Lower leg skin (tissue), 4 donors: ENCODE measurements at regions of chr1 and their contacts with region 1.

Region 1: DNA sequence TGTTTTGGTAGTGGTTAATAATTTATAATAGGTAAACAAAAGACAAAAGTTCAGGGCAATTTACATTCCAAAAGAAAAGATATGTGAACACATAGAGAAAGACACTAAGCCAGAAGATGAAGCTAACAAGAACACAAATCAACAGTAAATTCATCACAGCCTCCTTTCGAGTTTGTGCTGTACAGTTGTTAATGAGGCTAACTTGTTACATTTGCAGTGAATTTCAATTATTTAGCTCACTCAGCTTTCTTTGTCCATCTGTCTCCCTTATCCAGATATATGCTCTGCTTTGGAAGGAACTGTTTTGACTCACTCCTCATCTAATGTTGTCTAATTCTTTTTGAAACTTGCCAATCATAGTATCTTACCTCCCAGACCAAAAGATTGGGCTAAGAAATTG is 423.3 kb upstream of the OLFM3 start:
- DNase-seq: no peak
- H3K4me3 ChIP-seq: no peak overlapping the region
- CTCF ChIP-seq: no peak
- POLR2A ChIP-seq: no peak

Region 2: DNA sequence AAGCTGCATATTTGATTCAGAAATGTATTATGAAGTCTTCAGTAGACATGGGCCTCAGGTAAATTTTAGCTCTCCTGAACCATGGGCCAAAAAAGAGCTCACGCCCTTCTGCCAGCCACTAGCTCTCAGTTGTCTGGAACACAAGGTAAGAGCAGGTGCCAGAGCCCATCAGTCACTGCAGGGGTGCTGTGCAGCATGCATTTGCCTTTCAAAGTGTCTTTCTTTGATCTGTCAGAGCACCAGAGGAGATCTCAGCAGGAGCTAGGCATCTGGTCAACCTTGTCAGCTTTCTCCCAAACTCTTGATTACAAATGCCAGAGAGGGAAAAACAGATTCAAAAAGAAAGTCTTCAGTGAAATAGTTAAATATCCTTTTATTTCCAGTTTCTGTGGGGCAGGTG is 356.0 kb after region 1 on chr1:
- intact Hi-C with region 1: loop called (anchors 5 kb)
- DNase-seq: no peak
- H3K4me3 ChIP-seq: no peak overlapping the region
- CTCF ChIP-seq: no peak
- POLR2A ChIP-seq: no peak